A549 (cell line): ENCODE measurements at regions of chr1 and their contacts with region 1.

Region 1: GRCh38 chr1:115112496-115113375 is 23.4 kb upstream of the TSPAN2 start:
- DNase-seq: no peak
- ATAC-seq: peak; percentile 13 to 68; a peak in 3 of 6 replicates
- H3K4me3 ChIP-seq: no peak overlapping the region
- H3K27ac ChIP-seq: no peak overlapping the region
- H3K4me1 ChIP-seq: 0 out of 3 replicates have a peak, but pooled peaks cover 4% of the 10 kb centered on the region
- CTCF ChIP-seq: peak; percentile 69
- EP300 ChIP-seq: no peak
- POLR2A ChIP-seq: no peak
- RAD21 ChIP-seq: peak; percentile 68 to 70

Region 2: DNA sequence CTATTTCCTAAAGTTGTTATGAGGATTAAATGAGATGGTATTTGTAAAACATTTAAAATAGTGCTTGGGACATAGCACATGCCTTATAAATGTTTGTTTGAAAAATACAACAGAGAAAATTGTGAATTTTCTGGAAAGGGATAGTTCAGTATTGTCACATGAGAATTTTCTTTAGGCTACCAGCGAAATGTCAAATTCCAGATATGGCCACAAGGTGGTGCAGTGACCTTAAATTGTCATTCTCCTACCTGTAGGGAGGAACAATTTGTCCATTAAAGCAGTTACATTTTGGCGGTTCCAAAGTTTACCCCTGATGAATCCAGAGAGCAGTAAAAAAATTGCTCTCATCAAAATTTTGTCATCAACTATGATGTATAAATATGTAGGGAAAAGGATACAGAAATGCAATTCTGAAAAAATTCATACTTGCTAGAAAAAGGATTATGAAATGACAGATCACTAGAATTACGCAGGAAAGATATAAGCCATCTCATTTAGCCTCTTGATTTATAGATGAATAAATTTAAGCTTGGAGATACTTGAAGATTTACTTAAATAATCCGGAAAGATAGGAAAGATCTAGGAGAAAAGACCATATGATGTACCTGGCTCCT is 133.4 kb before region 1 on chr1:
- CTCF ChIA-PET with region 1: interaction called, 13 read pairs
- POLR2A ChIA-PET with region 1: no interaction called
- DNase-seq: peak; percentile 2 to 44
- ATAC-seq: peak in 1 of 2 experiments; percentile 40; a peak in 2 of 6 replicates
- H3K4me3 ChIP-seq: no peak overlapping the region
- H3K27ac ChIP-seq: no peak overlapping the region
- H3K4me1 ChIP-seq: no peaks in the 10 kb centered on the region
- CTCF ChIP-seq: peak; percentile 64
- EP300 ChIP-seq: no peak
- POLR2A ChIP-seq: no peak
- RAD21 ChIP-seq: peak; percentile 73 to 74

Region 3: GRCh38 chr1:115098979-115099692 is 13.6 kb before region 1 on chr1:
- CTCF ChIA-PET with region 1: interaction called, 10 read pairs
- POLR2A ChIA-PET with region 1: no interaction called
- DNase-seq: peak in 1 of 2 experiments; percentile 46
- ATAC-seq: peak in 1 of 2 experiments; percentile 29; a peak in 1 of 6 replicates
- H3K4me3 ChIP-seq: no peak overlapping the region
- H3K27ac ChIP-seq: no peak overlapping the region
- H3K4me1 ChIP-seq: no peaks in the 10 kb centered on the region
- CTCF ChIP-seq: no peak
- EP300 ChIP-seq: no peak
- POLR2A ChIP-seq: no peak
- RAD21 ChIP-seq: no peak

Region 4: DNA sequence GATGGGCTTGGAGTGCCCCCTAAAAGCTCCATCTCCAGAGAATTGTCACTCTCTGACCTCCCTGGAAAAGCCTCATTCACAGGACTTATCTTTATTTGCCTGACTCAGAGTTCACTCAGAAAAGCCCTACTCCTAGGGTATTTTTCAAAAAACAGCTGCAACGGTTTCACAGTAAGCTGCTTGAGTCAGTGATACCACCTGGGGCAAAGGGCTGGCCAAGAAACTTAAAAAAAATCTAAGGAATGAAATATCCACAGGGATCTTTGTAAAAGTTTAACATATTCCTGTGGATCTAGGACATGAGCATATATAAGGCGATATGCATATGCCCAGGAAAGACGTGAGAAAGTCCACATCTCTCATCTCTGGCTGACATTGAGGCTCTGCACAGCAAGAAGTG is 10.4 kb after region 1 on chr1:
- CTCF ChIA-PET with region 1: interaction called, 13 read pairs
- POLR2A ChIA-PET with region 1: no interaction called
- DNase-seq: no peak
- ATAC-seq: no peak
- H3K4me3 ChIP-seq: no peak overlapping the region
- H3K27ac ChIP-seq: no peak overlapping the region
- H3K4me1 ChIP-seq: no peaks in the 10 kb centered on the region
- CTCF ChIP-seq: no peak
- EP300 ChIP-seq: no peak
- POLR2A ChIP-seq: no peak
- RAD21 ChIP-seq: no peak